Right ventricle myocardium inferior (tissue), 1 donor: ENCODE measurements at regions of chr12 and their contacts with region 1.

Region 1: GRCh38 chr12:106309671-106310505 is 7.4 kb downstream of the TCP11L2 start:
- DNase-seq: no peak
- ATAC-seq: peak; percentile 33

Region 2: DNA sequence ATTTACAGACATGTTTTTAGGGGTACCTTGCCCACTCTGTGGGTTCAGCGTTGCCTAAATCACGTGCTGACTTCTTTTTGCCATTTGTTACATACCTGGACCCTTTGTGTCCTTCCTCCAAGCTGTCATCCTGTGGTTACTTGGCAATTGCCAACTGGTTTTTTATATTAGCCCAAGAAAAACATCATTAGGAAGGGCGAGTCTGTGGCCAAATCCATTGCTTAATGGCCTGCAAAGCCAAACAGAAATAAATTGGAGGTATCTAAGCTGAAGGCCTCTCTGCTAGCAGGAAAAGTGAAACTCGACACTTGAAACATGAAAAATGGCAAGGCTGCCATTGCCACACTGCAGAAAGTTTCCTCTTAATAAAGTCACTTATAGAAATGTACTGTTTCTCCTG is 361.6 kb before region 1 on chr12:
- intact Hi-C with region 1: no loop called
- DNase-seq: no peak
- ATAC-seq: no peak

Region 3: DNA sequence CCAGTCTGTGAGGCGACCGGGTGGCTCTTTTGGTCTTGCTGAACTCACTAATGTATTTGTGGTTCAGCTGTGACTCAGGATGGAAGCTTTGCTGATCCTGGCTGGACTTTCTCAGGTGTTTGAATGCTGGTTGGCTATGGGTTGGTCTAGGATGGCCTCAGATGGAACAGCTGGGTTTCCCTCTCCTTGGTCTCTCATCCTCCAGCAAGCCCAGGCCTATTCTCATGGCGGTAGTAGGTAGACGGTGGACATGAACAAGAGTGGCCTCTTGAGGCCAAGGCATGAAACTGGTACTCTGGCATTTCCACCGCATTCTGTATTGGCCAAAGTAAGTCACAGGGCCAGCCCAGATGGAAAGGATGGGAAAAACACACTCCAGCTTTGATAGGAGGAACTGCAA is 35.9 kb after region 1 on chr12:
- intact Hi-C with region 1: loop called (anchors 5 kb)
- DNase-seq: no peak
- ATAC-seq: peak; percentile 32